Activated CD4-positive, alpha-beta T cell treated with anti-CD3 and anti-CD28 coated beads for 36 hours (primary cell): ENCODE measurements at regions of chr11 and their contacts with region 1.

Region 1: GRCh38 chr11:10091314-10092045 is 202.5 kb downstream of the SBF2 start:
- DNase-seq: no peak
- ATAC-seq: no peak
- H3K4me3 Mint-ChIP-seq: no peak overlapping the region
- H3K27ac Mint-ChIP-seq: no peak overlapping the region
- H3K4me1 Mint-ChIP-seq: peaks cover 12% of the 10 kb centered on the region
- H3K27me3 Mint-ChIP-seq: no peaks in the 10 kb centered on the region

Region 2: DNA sequence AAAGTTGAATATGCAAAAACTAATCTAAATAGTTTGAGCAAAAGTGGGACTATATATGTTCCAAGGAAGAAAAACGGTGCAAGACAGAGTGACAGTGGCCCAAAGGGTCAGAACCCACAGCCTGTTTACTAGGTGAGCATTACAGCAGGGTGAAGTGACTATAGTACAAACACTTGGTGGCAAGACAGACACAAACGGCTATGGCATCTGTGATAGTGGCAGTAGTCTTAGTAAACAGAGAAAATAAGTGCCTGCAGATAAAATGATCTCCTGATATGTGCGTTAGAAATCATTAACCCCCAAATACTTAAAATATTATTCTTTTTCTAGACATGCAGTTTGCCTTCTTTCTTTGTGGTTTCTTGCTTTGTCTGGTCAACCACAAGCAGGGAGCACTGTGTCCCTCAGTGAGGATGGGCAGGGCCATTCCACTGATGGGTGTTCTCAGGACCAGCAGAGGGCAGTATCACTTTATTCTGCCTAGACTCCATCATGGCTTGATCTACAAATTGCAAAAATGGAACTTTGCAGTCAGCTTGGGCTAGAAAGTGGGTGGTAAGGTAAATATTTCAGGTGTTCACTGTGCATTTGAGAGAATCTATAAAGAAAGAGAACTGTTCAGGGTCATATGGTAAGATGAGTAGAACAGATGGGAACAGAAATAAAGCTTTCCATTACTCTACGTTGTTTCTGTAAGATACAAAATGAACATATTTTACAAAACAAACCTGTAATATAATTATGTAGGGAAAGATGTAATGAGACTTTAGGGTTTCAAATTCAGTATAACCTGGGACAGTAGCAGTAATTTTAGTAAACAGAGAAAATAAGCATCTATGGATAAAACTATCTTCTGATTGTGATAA is 229.4 kb before region 1 on chr11:
- CTCF ChIA-PET with region 1: no interaction called
- POLR2A ChIA-PET with region 1: no interaction called
- intact Hi-C with region 1: loop called in 1 of 2 experiments (anchors 10 kb)
- DNase-seq: peak; percentile 71
- ATAC-seq: peak; percentile 74
- H3K4me3 Mint-ChIP-seq: no peak overlapping the region
- H3K27ac Mint-ChIP-seq: no peak overlapping the region
- H3K4me1 Mint-ChIP-seq: peaks cover 23% of the 10 kb centered on the region
- H3K27me3 Mint-ChIP-seq: no peaks in the 10 kb centered on the region

Region 3: GRCh38 chr11:10076458-10077141 is 14.9 kb before region 1 on chr11:
- CTCF ChIA-PET with region 1: interaction called, 12 read pairs
- POLR2A ChIA-PET with region 1: no interaction called
- intact Hi-C with region 1: no loop called
- DNase-seq: peak; percentile 58
- ATAC-seq: peak; percentile 51
- H3K4me3 Mint-ChIP-seq: no peak overlapping the region
- H3K27ac Mint-ChIP-seq: no peak overlapping the region
- H3K4me1 Mint-ChIP-seq: no peaks in the 10 kb centered on the region
- H3K27me3 Mint-ChIP-seq: no peaks in the 10 kb centered on the region

Region 4: GRCh38 chr11:10581481-10582019 is 490.1 kb after region 1 on chr11:
- CTCF ChIA-PET with region 1: no interaction called
- POLR2A ChIA-PET with region 1: no interaction called
- intact Hi-C with region 1: no loop called
- DNase-seq: no peak
- ATAC-seq: no peak
- H3K4me3 Mint-ChIP-seq: no peak overlapping the region
- H3K27ac Mint-ChIP-seq: no peak overlapping the region
- H3K4me1 Mint-ChIP-seq: no peaks in the 10 kb centered on the region
- H3K27me3 Mint-ChIP-seq: peaks cover 3% of the 10 kb centered on the region